ENCODE measurements at regions of chr1 and their contacts with region 1.

Region 1: GRCh38 chr1:41573785-41574713 is 89.6 kb upstream of the EDN2 start:
- DNase-seq: peak; percentile 88
- CTCF ChIP-seq: peak; percentile 80

Region 2: DNA sequence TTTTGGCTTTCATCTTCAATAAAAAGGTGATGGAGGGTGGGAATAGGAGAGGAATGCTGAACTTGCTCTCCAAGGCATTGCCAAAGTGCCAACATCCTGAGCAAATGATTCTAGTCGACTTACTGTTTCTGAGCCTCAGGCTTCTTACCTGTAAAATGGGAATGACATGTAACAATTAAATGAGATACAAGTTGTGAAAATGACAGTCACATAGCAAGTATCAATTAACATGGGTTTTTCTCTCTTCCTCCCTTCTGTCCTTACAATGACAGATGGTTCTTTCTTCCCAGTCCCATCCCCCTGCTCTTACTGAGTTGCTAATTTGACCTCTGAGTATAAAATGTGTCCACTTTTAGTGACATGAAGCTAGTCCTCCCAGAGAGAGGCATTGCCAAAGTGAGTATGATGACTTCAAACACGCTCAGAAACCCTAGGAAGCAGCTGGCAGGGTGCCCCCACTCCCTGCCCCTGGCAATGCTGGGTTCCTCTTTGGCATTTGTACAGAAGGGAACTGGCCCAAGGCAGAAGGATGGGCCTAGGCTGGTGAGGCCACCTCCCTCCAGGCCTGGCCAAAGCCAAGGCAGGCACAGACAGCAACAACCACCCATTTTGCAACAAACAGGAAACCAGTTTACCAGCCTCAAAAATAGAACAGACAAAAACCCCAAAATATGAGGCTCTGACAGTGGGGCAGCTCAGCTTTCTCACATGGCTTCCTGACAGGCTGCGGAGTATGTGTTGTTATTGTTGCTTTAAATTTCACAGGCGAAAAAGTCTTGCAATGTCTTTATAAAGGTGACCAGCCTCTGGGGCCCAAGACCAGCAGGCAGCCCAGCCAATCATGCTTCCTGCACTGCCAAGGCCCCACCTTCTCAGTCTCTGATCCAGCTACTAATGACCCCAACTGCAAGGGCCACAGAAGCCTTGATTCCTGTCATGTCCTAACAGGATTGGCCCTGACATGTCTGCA is 228.8 kb after region 1 on chr1:
- in situ Hi-C with region 1: no loop called
- DNase-seq: no peak
- CTCF ChIP-seq: no peak

Region 3: DNA sequence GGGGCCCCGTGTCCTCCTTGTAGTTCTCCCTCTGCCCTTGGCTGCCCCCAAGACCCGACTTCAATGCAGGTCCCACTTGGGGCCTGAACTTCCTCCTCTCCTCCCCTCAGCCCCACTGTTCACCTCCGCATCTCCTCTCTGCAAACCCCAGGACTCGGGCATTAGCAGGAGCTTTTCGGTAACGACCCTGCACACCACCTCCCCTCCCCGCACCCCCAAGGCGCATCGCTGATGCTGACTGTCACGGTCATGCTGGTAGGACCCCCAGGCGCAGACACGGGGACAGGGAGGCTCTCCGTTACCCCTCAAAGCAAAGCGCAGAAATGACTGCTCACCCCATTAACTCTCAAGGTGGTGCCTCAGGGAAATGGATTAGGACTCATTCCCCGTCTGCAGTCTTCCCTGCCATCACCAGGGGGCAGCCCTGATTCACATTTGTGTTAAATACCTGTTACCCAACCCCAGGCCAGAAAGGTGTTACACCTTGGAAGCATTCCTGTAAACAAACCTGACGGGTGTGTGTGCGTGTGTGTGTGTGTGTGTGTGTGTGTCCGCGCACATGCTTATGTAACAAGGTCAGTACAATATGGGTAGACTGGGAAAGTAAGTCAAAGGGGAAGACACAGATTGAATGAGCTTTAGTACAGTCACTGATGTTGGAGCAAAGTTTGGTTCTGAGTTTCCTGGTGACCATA is 572.7 kb after region 1 on chr1:
- in situ Hi-C with region 1: loop called (anchors 25 kb)
- DNase-seq: peak; percentile 85
- CTCF ChIP-seq: peak; percentile 88